Calu3 (cell line): ENCODE measurements at regions of chr11 and their contacts with region 1.

Region 1: DNA sequence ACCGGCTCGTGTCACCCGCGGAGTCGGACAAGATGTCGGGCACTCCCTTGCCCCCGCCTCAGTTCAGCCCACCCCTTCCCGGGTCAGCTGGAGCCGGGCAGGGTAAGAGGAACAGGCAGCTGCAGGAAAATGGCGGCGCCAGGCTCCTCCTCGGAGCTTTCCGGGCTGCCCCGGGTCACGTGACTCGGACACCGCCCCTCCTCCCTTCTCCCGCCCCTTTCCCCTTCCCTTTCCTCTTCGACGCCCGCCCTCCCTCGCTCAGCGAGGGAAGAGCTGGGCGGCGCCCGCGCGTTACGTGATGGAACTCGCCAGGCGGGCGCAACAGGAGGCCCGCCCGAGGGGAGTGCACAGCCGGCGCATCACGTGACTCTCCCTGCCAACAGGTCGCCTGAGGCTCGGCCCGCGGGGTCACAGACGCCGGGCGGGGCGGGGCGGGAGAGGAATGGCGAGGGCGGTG is at the start of gene PICALM:
- DNase-seq: peak; percentile 94
- H3K4me3 Mint-ChIP-seq: peak within 1 kb of the TSS; percentile 99
- H3K27ac Mint-ChIP-seq: peak within 1 kb of the TSS; percentile 99
- H3K4me1 Mint-ChIP-seq: peaks cover 28% of the 10 kb centered on the region
- H3K27me3 Mint-ChIP-seq: no peaks in the 10 kb centered on the region
- CTCF ChIP-seq: no peak
- total RNA-seq, gene PICALM: 116 and 124 TPM in 2 replicates

Region 2: DNA sequence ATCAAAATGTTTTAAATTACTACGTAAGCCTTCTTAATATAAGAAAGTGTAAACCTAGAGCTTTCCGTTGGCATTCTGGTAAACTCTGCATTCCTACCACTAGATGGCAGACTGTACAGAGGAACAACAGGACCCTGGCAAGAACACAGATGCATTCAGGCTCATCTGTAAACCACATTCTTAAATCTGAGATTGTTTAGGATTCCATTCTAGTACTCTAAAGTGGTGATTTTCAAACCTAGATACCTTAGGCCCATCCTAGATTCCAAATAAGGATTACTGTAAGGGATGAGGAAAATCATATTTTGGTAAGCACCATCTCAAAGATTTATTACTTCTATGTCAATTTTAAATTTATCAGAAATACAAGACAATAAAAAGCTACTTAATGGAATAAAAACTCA is 27.0 kb before region 1 on chr11:
- CTCF ChIA-PET with region 1: interaction called, 13 read pairs
- intact Hi-C with region 1: loop called (anchors 2 kb)
- DNase-seq: peak; percentile 71
- H3K4me3 Mint-ChIP-seq: no peak overlapping the region
- H3K27ac Mint-ChIP-seq: no peak overlapping the region
- H3K4me1 Mint-ChIP-seq: peaks cover 32% of the 10 kb centered on the region
- H3K27me3 Mint-ChIP-seq: no peaks in the 10 kb centered on the region
- CTCF ChIP-seq: peak; percentile 77

Region 3: DNA sequence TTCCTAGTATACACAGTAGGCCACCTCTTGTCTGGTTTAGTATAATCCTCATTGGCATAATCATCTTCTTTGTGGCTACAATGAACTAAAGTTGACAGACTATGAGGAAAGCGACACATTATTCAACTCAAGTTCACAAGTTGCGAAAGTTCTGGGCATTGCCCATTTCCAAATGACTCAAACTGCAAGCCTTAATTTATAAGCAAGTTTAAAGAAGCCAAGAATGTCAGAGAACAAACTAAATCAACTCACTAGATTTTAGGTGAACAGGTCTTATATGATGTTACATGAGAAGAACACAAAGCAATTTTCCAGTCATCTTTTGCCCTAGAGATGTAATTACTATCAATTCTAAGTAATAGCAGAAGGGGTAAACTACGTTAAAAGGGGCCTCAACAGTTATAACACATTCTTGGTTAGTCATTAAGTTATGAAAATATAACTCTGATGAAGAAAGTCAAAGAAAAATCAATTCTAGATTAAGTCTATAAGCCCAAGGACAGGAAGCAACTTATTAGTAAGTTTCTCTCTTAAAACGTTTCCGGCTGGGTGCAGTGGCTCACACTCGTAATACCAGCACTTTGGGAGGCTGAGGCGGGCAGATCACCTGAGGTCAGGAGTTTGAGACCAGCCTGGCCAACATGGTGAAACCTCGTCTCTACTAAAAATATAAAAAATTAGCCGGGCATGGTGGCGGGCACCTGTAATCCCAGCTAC is 21.5 kb before region 1 on chr11:
- CTCF ChIA-PET with region 1: interaction called, 13 read pairs
- intact Hi-C with region 1: loop called (anchors 2 kb)
- DNase-seq: no peak
- H3K4me3 Mint-ChIP-seq: peak overlapping the region; percentile 49
- H3K27ac Mint-ChIP-seq: peak overlapping the region; percentile 48
- H3K4me1 Mint-ChIP-seq: peaks cover 39% of the 10 kb centered on the region
- H3K27me3 Mint-ChIP-seq: no peaks in the 10 kb centered on the region
- CTCF ChIP-seq: no peak

Region 4: DNA sequence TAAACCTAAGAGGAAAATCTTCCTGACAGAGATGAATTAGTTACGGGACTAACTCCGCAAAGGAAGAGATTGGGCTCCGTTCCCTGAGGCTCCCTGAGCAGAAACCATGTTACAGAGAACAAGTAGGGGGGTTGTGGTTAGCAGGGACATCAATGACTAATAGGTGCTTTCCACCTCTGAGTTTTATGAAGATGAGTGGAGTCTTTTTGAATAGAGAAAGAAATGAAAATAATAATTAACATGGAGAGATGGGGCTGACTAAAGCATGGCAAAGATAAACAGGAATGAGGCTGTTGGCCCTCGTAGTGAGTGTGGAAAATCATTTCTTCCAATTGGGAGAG is 47.4 kb after region 1 on chr11:
- CTCF ChIA-PET with region 1: interaction called, 9 read pairs
- intact Hi-C with region 1: loop called (anchors 1 kb)
- DNase-seq: peak; percentile 23
- H3K4me3 Mint-ChIP-seq: peak overlapping the region; percentile 57
- H3K27ac Mint-ChIP-seq: peak overlapping the region; percentile 98
- H3K4me1 Mint-ChIP-seq: peaks cover 56% of the 10 kb centered on the region
- H3K27me3 Mint-ChIP-seq: no peaks in the 10 kb centered on the region
- CTCF ChIP-seq: no peak

Region 5: DNA sequence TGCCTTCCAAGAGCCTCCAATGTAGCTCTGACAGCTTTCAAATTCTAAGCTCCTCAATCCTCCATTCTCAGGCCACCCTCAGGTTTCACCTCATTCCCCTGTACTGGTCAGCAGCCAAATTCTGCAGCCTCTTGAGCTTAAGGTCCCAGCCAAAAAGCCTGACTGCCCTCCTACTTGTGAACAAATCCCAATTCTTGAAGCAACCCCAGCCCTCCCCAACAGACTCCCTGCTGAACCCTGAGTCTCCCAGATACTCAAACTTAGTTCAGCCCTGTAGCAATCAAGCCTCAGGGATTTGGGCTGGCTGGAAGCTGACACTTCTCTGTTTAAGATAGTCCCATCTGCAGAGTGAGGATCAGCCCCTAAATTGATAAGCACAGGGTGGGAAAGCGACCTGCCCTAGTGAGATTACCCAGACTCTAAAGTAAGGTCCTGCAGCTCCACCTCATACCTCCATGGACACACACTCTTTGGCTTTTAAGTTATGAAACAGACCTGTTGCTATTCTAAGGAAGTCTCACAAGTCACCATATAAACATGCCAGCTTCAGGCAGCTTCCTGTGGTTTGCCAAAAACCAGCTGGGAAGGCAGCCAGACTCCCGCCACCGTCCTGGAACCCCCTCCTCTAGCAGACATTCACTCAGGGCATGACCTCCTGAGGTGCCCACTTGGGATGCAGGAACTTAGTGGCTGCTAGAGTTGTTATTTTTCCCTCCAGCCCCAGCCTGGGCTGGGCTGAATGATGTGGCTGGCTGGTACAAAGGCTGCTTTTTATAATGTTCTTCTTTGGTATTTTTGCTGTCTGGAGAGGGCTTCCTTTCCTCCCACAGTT is 82.4 kb after region 1 on chr11:
- CTCF ChIA-PET with region 1: interaction called, 3 read pairs
- intact Hi-C with region 1: loop called (anchors 5 kb)
- DNase-seq: peak; percentile 59
- H3K4me3 Mint-ChIP-seq: peak overlapping the region; percentile 23
- H3K27ac Mint-ChIP-seq: peak overlapping the region; percentile 94
- H3K4me1 Mint-ChIP-seq: peaks cover 57% of the 10 kb centered on the region
- H3K27me3 Mint-ChIP-seq: no peaks in the 10 kb centered on the region
- CTCF ChIP-seq: no peak

Region 6: GRCh38 chr11:86193297-86194095 is 124.5 kb after region 1 on chr11:
- CTCF ChIA-PET with region 1: interaction called, 24 read pairs
- intact Hi-C with region 1: loop called (anchors 2 kb)
- DNase-seq: peak; percentile 67
- H3K4me3 Mint-ChIP-seq: peak overlapping the region; percentile 27
- H3K27ac Mint-ChIP-seq: peak overlapping the region; percentile 92
- H3K4me1 Mint-ChIP-seq: peaks cover 27% of the 10 kb centered on the region
- H3K27me3 Mint-ChIP-seq: no peaks in the 10 kb centered on the region
- CTCF ChIP-seq: peak; percentile 27

Region 7: DNA sequence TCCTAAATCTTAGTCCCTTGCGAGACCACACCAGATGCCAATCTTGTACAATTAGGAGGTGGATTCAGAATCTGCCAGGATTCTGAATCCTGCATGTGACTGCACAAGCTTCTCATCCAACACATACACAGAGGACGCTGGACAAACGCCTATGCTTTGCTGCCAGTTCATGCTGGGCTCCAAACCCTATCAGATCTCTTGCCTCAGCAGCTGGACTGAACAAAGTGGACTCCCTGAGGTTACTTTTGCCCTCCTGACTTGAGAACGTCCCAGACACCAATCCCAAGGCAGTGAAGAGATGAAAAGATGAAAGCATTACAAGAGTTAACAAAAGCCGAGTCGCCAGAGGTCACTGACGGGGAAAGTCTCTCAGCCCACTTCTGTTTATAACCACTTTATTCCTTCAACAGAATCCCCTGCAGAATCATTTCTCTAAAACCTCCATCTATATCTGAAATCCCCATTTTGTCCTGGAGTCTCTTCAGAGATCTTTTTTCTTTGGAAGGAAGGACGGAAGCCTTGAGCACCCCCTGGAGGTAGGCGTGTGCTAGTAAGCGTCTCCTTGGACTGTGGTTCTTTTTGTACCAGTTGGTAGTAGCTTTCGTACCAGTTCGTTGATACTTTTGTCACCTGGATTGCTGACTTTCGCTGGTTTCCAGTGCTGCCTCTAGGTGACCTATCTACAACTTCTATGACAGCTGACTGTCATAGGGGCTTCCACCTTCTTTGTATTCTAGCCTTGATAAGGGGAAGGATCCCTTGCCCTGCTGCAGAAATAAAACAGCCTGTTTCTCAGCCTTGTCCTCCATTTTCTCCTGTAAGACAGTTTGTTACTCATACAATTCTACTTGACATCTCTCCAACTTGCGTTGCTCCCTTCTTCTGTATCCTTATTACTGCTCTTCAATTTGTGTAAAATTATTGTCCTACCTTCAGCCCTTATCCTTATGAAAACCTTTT is 149.4 kb after region 1 on chr11:
- CTCF ChIA-PET with region 1: no interaction called
- intact Hi-C with region 1: loop called (anchors 5 kb)
- DNase-seq: peak; percentile 72
- H3K4me3 Mint-ChIP-seq: peak overlapping the region; percentile 7
- H3K27ac Mint-ChIP-seq: peak overlapping the region; percentile 9
- H3K4me1 Mint-ChIP-seq: peaks cover 22% of the 10 kb centered on the region
- H3K27me3 Mint-ChIP-seq: no peaks in the 10 kb centered on the region
- CTCF ChIP-seq: peak; percentile 53

Region 8: GRCh38 chr11:86395061-86395551 is 326.1 kb after region 1 on chr11:
- CTCF ChIA-PET with region 1: no interaction called
- intact Hi-C with region 1: no loop called
- DNase-seq: no peak
- H3K4me3 Mint-ChIP-seq: no peak overlapping the region
- H3K27ac Mint-ChIP-seq: no peak overlapping the region
- H3K4me1 Mint-ChIP-seq: no peaks in the 10 kb centered on the region
- H3K27me3 Mint-ChIP-seq: no peaks in the 10 kb centered on the region
- CTCF ChIP-seq: no peak